ENCODE measurements at regions of chr19 and their contacts with region 1.

Region 1: DNA sequence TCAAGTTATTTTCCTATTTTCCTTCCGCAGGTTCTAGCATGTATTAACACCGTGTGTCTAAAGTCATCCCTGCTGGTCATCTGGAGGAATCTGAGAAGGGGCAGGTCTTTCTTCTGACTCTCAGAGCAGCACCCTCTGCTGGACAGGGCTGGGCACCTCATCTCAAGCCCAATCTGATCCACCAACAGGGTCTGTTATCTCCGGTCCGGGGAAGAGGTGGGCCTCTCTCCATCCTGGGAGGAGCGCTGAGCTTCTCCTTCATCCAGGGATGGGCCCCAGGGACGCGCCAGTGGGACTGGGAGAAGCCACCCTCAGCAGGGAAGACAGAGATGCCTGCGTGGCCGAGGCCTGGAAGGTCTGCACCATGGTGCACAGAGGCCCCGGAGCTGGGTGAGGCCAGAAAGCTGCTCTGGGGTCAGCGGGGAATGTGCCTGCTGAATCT is 26.0 kb upstream of the ZNF331 start:
- DNase-seq: peak; percentile 29 to 44
- H3K4me3 ChIP-seq: no peak overlapping the region
- H3K27ac ChIP-seq: no peak overlapping the region
- H3K4me1 ChIP-seq: no peaks in the 10 kb centered on the region
- H3K27me3 ChIP-seq: no peaks in the 10 kb centered on the region
- CTCF ChIP-seq: peak; percentile 69

Region 2: DNA sequence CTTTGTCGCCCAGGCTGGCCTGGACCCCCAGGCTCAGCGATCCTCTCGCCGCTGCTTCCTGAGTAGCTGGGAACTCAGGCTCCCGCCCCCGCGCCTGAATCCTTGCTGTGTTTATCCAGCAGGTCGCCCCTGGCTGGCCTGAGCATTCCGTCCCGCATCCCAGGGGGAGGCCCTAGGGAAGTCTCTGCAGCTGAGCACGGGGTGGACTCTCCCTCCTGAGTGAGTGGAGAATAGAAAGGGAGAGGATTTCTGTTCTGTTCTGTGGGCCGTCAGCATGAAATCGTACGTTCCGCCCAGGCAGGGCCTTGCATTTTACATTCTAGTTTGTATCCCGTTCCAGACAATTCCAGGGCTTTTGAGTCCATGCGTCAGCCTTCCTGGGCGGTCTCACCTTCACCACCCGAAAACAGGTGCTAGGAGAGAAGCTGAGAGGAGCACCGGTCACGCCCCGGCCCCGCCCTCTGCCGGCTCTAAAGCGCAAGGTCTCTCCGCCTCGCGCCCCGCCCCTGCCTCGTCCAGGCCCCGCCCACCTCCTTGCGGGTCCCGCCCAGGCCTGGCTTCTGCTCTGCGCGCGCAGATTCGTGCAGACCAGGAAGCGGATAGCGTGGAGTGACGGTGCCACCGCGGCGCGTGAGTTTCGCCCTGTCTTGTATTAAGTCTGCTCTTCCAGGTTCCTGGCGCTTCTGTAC is 80.4 kb before region 1 on chr19 and contains the start of gene ZNF761:
- CTCF ChIA-PET with region 1: no interaction called
- POLR2A ChIA-PET with region 1: no interaction called
- intact Hi-C with region 1: loop called (anchors 10 kb)
- DNase-seq: peak; percentile 90 to 99
- H3K4me3 ChIP-seq: peak within 1 kb of the TSS; percentile 91
- H3K27ac ChIP-seq: peak within 1 kb of the TSS; percentile 67
- H3K4me1 ChIP-seq: no peaks in the 10 kb centered on the region; the same call in 1 of the 2 replicates
- H3K27me3 ChIP-seq: no peaks in the 10 kb centered on the region
- CTCF ChIP-seq: peak; percentile 60
- total RNA-seq, gene ZNF761: 15.6 and 16.4 TPM in 2 replicates

Region 3: GRCh38 chr19:53467485-53468262 is 44.3 kb before region 1 on chr19 and contains the start of gene ZNF813:
- CTCF ChIA-PET with region 1: no interaction called
- POLR2A ChIA-PET with region 1: interaction called, 28 read pairs
- intact Hi-C with region 1: no loop called
- DNase-seq: peak; percentile 65 to 88
- H3K4me3 ChIP-seq: peak within 1 kb of the TSS; percentile 98
- H3K27ac ChIP-seq: no peak within 1 kb of the TSS; the same call in 1 of the 2 replicates
- H3K4me1 ChIP-seq: no peaks in the 10 kb centered on the region
- H3K27me3 ChIP-seq: no peaks in the 10 kb centered on the region
- CTCF ChIP-seq: no peak
- total RNA-seq, gene ZNF813: 6.1 and 6.3 TPM in 2 replicates

Region 4: GRCh38 chr19:53655042-53655665 is 143.2 kb after region 1 on chr19:
- CTCF ChIA-PET with region 1: no interaction called
- POLR2A ChIA-PET with region 1: no interaction called
- intact Hi-C with region 1: no loop called
- DNase-seq: no peak
- H3K4me3 ChIP-seq: no peak overlapping the region
- H3K27ac ChIP-seq: no peak overlapping the region
- H3K4me1 ChIP-seq: peaks cover 5% of the 10 kb centered on the region; the same call in 1 of the 2 replicates
- H3K27me3 ChIP-seq: no peaks in the 10 kb centered on the region
- CTCF ChIP-seq: no peak

Region 5: GRCh38 chr19:54209811-54210494 is 698.0 kb after region 1 on chr19:
- CTCF ChIA-PET with region 1: no interaction called
- POLR2A ChIA-PET with region 1: no interaction called
- intact Hi-C with region 1: no loop called
- DNase-seq: peak; percentile 95 to 96
- H3K4me3 ChIP-seq: no peak overlapping the region
- H3K27ac ChIP-seq: peak overlapping the region; percentile 60
- H3K4me1 ChIP-seq: peaks cover 34% of the 10 kb centered on the region
- H3K27me3 ChIP-seq: no peaks in the 10 kb centered on the region
- CTCF ChIP-seq: no peak

Measured in PC-9 (cell line).